ENCODE measurements at regions of chr1 and their contacts with region 1.

Region 1: GRCh38 chr1:175208773-175209492 is 16.4 kb upstream of the KIAA0040 start:
- DNase-seq: peak in 8 of 9 donors; percentile 36 to 85 (median 78)
- ATAC-seq: peak; percentile 94
- H3K4me3 ChIP-seq: peak overlapping the region; percentile 41
- H3K4me3 Mint-ChIP-seq: peak overlapping the region; percentile 71 to 96 (median 88)
- H3K27ac ChIP-seq: peak overlapping the region; percentile 62
- H3K27ac Mint-ChIP-seq: peak overlapping the region; percentile 86 to 99 (median 95)
- H3K4me1 ChIP-seq: peaks cover 55 to 70% of the 10 kb centered on the region in 2 donors
- H3K4me1 Mint-ChIP-seq: peaks cover 44 to 93% (median 76%) of the 10 kb centered on the region in 7 donors
- H3K27me3 ChIP-seq: no peaks in the 10 kb centered on the region
- H3K27me3 Mint-ChIP-seq: no peaks in the 10 kb centered on the region

Region 2: GRCh38 chr1:174800216-174800851 is 408.6 kb before region 1 on chr1:
- CTCF ChIA-PET with region 1: no interaction called
- POLR2A ChIA-PET with region 1: no interaction called
- intact Hi-C with region 1: loop called in 1 of 2 experiments (anchors 10 kb)
- DNase-seq: peak in 4 of 9 donors; percentile 2 to 29 (median 16)
- ATAC-seq: peak; percentile 7
- H3K4me3 ChIP-seq: peak overlapping the region; percentile 73
- H3K4me3 Mint-ChIP-seq: no peak overlapping the region
- H3K27ac ChIP-seq: peak overlapping the region; percentile 81
- H3K27ac Mint-ChIP-seq: no peak overlapping the region
- H3K4me1 ChIP-seq: peaks cover 7 to 9% of the 10 kb centered on the region in 2 donors
- H3K4me1 Mint-ChIP-seq: peaks cover 0 to 18% (median 6%) of the 10 kb centered on the region in 7 donors
- H3K27me3 ChIP-seq: no peaks in the 10 kb centered on the region
- H3K27me3 Mint-ChIP-seq: no peaks in the 10 kb centered on the region

Region 3: DNA sequence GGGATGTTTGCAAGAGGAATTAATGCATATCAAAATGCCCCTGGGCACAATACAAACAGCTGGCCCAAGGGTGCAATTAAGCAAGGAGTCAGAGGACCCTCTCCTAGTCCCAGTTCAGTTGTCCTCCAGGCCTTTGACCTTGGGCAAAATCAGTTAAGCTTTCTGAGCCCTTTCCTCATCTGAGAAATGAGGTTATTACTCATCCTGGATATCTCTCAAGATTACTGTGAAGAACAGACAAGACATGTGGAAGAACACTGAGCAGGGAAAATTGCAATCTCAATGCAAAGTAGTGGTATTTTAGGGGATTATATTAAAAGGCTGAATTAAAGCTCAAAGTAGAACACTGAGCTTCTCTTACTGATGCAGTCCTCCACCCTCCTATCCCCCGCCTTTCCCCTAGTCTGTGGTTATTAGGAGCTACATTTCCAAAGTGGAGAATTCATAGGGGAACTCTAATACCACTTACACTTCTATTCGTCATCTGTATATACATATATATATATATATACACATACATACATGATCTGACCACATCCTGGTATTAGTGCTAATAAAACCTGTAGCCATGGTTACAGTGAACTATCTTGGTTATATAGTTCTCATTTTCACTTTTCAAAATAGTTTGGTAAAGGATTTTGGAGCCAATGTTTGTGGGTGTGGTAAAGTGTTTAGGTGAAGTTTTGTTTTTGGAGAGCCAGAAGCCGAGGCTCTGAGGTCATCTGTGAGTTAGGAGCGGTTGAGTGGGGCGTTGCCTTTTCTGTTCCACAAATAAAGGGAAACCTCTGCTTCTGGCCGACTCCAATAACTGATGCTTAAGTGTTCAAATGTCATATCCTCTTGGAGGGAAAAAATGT is 34.4 kb before region 1 on chr1:
- CTCF ChIA-PET with region 1: no interaction called
- POLR2A ChIA-PET with region 1: no interaction called
- intact Hi-C with region 1: loop called in 1 of 2 experiments (anchors 5 kb)
- DNase-seq: no peak
- ATAC-seq: no peak
- H3K4me3 ChIP-seq: no peak overlapping the region
- H3K4me3 Mint-ChIP-seq: no peak overlapping the region
- H3K27ac ChIP-seq: no peak overlapping the region
- H3K27ac Mint-ChIP-seq: peak overlapping the region in 1 of 9 donors; percentile 19
- H3K4me1 ChIP-seq: peaks cover 0 to 15% of the 10 kb centered on the region in 2 donors
- H3K4me1 Mint-ChIP-seq: peaks cover 32 to 85% (median 77%) of the 10 kb centered on the region in 7 donors
- H3K27me3 ChIP-seq: no peaks in the 10 kb centered on the region
- H3K27me3 Mint-ChIP-seq: no peaks in the 10 kb centered on the region

Region 4: DNA sequence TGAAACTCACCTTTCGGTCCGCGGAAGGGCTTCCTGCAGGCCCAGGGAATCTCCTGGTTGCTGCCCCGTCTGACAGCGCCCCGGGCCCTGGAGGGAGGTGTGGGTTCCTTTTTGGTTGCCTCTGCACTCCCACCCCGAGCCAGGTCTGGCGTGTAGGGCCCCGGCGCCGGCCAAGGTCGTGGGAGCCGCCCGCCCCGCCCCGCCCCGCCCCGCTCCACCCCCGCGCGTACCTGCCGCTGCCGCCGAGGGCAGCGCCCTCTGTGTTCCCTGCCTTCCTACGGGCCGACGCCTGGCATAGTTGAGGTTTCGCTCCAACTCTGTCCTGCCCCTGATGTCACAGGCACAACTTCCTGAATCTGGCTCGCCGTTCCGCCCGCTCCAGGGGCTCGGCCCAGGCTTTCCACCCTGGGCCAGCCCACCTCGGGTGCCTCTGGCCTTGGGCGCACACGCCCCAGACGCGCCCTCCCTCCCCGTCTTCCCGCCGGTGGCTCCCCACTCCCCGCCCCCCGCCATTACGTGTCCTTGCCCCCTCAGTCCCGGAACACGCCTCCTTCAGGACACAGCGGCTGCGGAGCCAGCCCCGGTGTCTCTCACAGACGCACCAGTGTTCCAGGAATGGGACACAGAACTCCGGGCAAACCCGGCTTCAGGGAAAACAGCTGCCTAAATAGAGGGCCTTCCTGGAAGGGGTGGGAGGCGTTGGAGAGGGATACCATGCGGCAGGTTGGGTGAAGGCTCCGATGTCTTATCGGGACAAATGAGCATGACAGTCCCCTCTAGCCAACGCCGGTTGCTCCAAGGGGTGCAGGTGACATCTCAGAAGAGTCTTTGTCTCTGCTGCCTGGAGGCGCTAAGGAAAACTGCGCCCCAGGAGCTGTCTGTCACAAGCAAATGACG is 16.1 kb before region 1 on chr1 and contains the start of gene KIAA0040:
- CTCF ChIA-PET with region 1: interaction called, 12 read pairs
- POLR2A ChIA-PET with region 1: interaction called, 42 read pairs
- intact Hi-C with region 1: loop called (anchors 1 kb)
- DNase-seq: peak; percentile 25 to 66 (median 40)
- ATAC-seq: peak; percentile 78
- H3K4me3 ChIP-seq: peak within 1 kb of the TSS; percentile 90
- H3K4me3 Mint-ChIP-seq: peak within 1 kb of the TSS; percentile 89 to 100 (median 97)
- H3K27ac ChIP-seq: peak within 1 kb of the TSS; percentile 80
- H3K27ac Mint-ChIP-seq: peak within 1 kb of the TSS; percentile 73 to 97 (median 92)
- H3K4me1 ChIP-seq: peaks cover 38 to 43% of the 10 kb centered on the region in 2 donors
- H3K4me1 Mint-ChIP-seq: peaks cover 40 to 67% (median 53%) of the 10 kb centered on the region in 7 donors
- H3K27me3 ChIP-seq: no peaks in the 10 kb centered on the region
- H3K27me3 Mint-ChIP-seq: no peaks in the 10 kb centered on the region
- total RNA-seq, gene KIAA0040: 21.7 to 88.1 (median 27.0) TPM

Region 5: DNA sequence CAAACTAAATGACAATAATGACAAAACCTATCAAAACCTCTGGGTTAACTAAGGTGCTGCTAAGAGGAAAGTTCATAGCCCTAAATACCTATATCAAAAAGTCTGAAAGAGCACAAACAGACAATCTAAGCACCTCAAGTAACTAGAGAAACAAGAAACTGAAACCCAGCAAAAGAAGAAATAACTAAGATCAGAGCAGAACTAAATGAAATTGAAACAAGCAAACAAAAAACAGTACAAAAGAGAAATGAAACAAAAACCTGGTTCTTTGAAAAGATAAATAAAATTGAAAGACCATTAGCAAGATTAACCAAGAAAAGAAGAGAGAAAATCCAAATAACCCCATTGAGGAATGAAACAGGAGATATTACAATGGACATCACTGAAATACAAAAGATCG is 28.5 kb after region 1 on chr1:
- CTCF ChIA-PET with region 1: no interaction called
- POLR2A ChIA-PET with region 1: interaction called, 3 read pairs
- intact Hi-C with region 1: loop called in 1 of 2 experiments (anchors 1 kb)
- DNase-seq: no peak
- ATAC-seq: no peak
- H3K4me3 ChIP-seq: no peak overlapping the region
- H3K4me3 Mint-ChIP-seq: peak overlapping the region in 1 of 10 donors; percentile 53
- H3K27ac ChIP-seq: no peak overlapping the region
- H3K27ac Mint-ChIP-seq: peak overlapping the region in 1 of 9 donors; percentile 62
- H3K4me1 ChIP-seq: peaks cover 0 to 12% of the 10 kb centered on the region in 2 donors
- H3K4me1 Mint-ChIP-seq: peaks cover 13 to 35% (median 25%) of the 10 kb centered on the region in 7 donors
- H3K27me3 ChIP-seq: no peaks in the 10 kb centered on the region
- H3K27me3 Mint-ChIP-seq: peaks cover 0 to 4% (median 0%) of the 10 kb centered on the region in 5 donors

Region 6: DNA sequence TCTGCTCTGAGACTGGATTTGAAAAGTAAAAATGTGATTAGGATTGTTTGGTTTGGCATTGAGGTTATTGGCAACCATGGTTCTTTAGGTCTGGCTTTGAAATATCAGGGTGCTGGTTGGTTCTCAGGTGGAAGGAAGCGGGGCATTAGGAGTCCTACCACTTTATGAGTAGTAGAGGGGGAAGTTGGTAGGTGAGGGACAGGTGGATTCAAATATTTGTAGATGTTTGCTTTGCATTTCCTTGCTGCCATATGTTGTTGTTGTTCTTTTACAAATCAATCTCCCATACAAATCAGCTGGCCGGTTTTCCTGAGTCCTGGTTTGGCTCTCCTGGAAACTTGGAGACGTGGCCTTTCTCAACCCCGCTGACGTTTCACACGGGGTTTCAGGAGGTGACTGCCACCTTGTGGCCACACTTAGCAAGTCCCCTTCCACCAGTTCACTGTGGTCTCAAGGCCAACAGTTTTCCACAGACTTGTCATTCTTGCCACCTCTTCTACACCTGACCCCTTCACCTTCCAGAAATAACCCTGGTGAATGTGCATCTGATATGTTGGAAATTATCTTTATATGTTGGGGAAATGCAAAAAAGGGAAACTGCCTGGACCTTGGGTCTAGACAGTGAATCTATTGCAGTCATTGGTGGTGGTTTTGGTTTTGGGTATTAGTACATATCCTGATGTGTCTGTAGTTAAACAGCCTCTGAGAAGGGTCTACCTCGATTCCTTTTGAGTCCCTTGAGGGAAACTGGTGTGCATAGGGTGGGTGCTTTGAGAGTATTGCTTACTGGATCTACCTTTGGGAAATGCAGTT is 110.7 kb after region 1 on chr1:
- CTCF ChIA-PET with region 1: interaction called, 14 read pairs
- POLR2A ChIA-PET with region 1: no interaction called
- intact Hi-C with region 1: loop called in 1 of 2 experiments (anchors 1 kb)
- DNase-seq: peak; percentile 45 to 71 (median 62)
- ATAC-seq: peak; percentile 91
- H3K4me3 ChIP-seq: no peak overlapping the region
- H3K4me3 Mint-ChIP-seq: peak overlapping the region in 5 of 10 donors; percentile 8 to 44 (median 42)
- H3K27ac ChIP-seq: no peak overlapping the region
- H3K27ac Mint-ChIP-seq: no peak overlapping the region
- H3K4me1 ChIP-seq: peaks cover 4 to 5% of the 10 kb centered on the region in 2 donors
- H3K4me1 Mint-ChIP-seq: peaks cover 4 to 29% (median 18%) of the 10 kb centered on the region in 7 donors
- H3K27me3 ChIP-seq: no peaks in the 10 kb centered on the region
- H3K27me3 Mint-ChIP-seq: peaks cover 0 to 29% (median 5%) of the 10 kb centered on the region in 5 donors

Region 7: DNA sequence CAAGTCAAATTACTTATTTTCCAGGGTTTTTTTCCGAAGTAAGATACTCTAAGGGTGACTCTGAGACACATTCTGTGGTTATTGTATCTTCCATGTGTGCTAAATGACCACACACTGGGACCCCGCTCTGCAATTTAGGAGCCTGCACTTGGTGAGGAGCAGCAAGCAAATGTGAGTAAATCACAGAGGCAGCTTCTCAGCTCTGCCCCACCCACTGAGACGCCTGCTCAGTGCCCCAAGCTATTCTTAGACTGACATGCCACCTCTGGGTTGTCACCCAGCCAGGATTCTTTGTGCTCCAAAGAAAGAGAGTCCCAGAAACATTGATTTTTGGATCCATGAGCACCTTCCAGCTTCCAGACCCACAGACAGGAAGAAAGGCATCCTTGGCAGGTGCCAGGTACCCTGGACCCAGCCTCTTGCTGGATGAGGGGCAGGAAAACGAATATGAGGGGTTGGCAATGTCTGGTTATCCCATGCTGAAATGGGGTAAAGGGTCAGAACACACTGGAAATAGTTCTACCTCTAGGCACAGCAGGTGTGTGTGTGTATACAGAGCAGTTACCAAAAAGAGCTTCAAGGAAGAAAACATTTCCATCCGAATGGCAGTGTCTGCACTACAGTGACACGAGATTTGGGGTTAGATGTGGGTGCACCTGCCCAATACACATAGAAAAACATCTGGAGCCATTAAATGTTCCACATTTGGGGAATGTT is 493.3 kb after region 1 on chr1:
- CTCF ChIA-PET with region 1: no interaction called
- POLR2A ChIA-PET with region 1: no interaction called
- intact Hi-C with region 1: no loop called
- DNase-seq: no peak
- ATAC-seq: no peak
- H3K4me3 ChIP-seq: no peak overlapping the region
- H3K4me3 Mint-ChIP-seq: no peak overlapping the region
- H3K27ac ChIP-seq: no peak overlapping the region
- H3K27ac Mint-ChIP-seq: no peak overlapping the region
- H3K4me1 ChIP-seq: no peaks in the 10 kb centered on the region
- H3K4me1 Mint-ChIP-seq: peaks cover 0 to 1% (median 0%) of the 10 kb centered on the region in 7 donors
- H3K27me3 ChIP-seq: no peaks in the 10 kb centered on the region
- H3K27me3 Mint-ChIP-seq: peaks cover 9 to 13% (median 11%) of the 10 kb centered on the region in 5 donors